BJ (cell line): ENCODE measurements at regions of chr15 and their contacts with region 1.

Region 1: DNA sequence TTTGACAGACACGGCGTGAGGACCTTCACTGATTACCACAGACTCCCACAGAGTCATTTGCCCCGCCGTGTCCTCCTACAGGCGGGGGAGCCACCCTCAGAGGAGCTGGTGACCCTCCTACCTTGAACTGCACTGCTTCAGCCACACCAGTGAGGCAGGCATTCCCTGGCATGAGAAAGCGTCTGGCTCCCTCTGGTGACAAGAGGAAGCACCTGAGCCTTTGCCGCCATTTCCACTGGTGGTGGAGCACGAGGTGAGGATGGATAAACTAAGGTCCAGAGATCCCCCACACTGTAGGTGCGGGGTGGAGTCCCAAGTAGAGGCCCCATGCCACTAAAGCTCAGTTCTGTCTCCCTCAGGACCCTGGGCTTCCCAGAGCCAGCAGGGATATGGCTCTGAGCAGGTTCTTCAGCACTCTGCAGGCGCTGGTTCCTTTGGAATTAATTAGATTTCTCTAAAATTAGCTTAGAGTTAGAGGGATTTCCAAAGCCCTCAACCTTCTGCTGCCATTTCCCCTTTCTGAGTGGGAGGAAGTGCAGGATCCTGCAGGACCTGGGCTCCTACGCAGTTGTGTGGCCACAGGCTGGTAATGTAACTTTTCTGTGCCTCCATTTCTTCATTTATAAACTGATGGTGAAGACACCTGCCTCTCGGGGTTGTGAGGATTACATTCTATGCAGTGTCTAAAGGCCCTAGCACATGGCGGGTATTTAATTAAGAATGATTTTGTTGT is 224.0 kb downstream of the SLCO3A1 start:
- DNase-seq: no peak
- H3K4me3 ChIP-seq: no peak overlapping the region
- H3K27me3 ChIP-seq: no peaks in the 10 kb centered on the region
- CTCF ChIP-seq: peak; percentile 82

Region 2: GRCh38 chr15:91302588-91303439 is 774.7 kb before region 1 on chr15:
- CTCF ChIA-PET with region 1: interaction called, 59 read pairs
- POLR2A ChIA-PET with region 1: no interaction called
- DNase-seq: no peak
- H3K4me3 ChIP-seq: no peak overlapping the region
- H3K27me3 ChIP-seq: peaks cover 2% of the 10 kb centered on the region; the same call in 1 of the 2 replicates
- CTCF ChIP-seq: peak; percentile 74

Region 3: DNA sequence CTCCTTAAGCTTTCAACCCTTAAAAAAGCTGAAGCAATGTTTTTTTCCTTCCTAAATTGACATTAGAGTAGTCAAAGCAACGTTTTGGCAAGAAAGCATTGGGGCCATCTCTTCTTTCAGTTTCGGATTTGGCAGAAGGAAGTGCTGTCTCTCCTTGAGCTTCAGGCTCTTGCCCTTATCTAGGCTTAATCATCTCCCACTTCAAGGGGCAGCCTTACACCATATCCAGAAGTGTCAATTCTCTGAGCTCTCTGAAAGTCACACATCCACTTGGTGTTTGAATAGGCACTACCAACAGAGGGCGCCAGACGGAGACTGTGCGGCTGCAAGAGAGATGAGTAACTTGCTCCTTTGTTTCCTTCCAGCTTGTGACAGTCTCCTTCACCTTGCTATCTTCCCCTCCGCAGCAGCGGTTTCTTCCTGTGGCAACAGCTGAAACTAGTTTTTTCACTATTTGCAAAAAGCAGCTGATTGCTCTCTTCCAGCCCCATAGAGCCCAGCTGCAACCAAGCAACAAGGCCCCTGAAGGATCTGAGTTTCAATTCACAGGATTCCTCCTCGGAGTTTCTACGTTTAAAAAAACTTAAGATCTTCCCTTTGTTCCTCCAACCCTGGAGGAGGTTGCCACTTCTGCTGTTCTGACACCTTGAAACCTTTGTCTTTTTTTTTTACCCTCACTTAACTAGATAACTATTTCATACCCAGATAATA is 371.0 kb before region 1 on chr15:
- CTCF ChIA-PET with region 1: interaction called, 23 read pairs
- POLR2A ChIA-PET with region 1: no interaction called
- DNase-seq: no peak
- H3K4me3 ChIP-seq: no peak overlapping the region
- H3K27me3 ChIP-seq: no peaks in the 10 kb centered on the region
- CTCF ChIP-seq: peak; percentile 77

Region 4: GRCh38 chr15:91844928-91845327 is 232.6 kb before region 1 on chr15:
- CTCF ChIA-PET with region 1: interaction called, 27 read pairs
- POLR2A ChIA-PET with region 1: no interaction called
- DNase-seq: no peak
- H3K4me3 ChIP-seq: no peak overlapping the region
- H3K27me3 ChIP-seq: no peaks in the 10 kb centered on the region
- CTCF ChIP-seq: no peak

Region 5: DNA sequence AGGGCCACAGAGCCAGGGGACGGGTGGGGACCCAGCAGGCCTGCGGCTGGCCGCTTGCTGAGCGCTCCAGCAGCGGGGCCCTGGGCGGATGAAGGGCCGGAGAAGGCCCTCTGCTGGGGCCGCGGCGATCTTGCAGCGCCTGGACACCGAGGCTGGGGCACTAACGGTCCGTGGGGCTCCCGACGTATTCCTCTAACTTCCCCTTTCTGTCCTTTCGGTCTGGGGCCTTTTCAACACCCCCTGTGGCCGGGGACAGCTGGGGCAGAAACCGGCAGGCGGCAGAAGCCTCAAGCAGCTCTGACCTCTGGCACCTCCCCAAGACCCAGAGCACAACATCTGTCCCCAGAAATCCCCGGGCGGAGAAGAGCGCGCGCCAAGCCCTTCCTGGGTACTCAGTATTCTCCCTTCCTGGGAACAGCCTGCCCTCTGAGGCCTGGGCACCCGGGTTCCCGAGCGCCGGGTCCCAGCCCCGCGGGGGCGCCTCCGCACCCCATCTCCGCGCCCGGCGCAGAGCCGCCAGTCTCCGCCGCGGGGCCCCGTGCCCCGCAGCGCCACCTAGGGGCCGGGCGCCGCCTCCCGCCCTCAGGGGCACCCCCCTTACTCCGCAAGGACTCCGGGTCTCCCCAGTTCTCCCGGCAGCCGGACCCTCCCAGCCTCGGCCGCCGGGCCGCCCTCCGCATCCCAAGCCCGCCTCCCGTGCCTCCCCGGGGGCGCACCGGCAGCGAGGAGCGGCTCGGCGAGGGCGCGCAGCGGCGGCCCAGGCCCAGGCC is 224.6 kb before region 1 on chr15:
- CTCF ChIA-PET with region 1: interaction called, 27 read pairs
- POLR2A ChIA-PET with region 1: no interaction called
- DNase-seq: no peak
- H3K4me3 ChIP-seq: peak overlapping the region; percentile 58
- H3K27me3 ChIP-seq: no peaks in the 10 kb centered on the region
- CTCF ChIP-seq: peak; percentile 78

Region 6: GRCh38 chr15:92035961-92036360 is 41.6 kb before region 1 on chr15:
- CTCF ChIA-PET with region 1: no interaction called
- POLR2A ChIA-PET with region 1: no interaction called
- DNase-seq: no peak
- H3K4me3 ChIP-seq: no peak overlapping the region
- H3K27me3 ChIP-seq: no peaks in the 10 kb centered on the region
- CTCF ChIP-seq: no peak

Region 7: DNA sequence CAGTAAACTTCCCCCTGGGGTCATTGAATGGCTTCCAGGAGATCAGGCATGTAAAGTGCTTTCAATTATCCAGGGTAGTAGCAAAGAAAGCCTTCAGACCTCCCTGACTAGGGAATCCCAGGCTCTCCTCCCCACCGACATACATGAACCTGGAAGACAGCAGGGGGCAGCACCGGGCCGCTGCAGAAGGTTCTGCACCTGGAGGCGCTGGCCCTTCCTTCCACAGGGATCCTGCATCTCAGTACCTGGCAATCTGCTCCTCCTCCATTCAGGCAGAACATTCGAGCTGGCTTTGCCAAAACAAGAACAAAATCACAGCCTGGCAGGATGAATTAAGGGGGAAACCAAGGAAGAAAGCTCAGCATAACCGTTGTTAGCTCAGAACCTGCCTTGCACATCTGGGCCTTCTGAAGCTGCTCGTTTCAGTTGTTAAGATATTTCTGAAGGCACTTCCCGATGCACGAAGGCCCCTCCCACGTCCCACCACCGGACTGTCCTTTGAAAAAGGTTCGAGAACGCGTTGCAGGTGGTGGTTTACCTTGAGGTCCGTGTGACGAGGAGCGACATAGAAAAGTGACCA is 13.7 kb after region 1 on chr15:
- CTCF ChIA-PET with region 1: interaction called, 21 read pairs
- POLR2A ChIA-PET with region 1: no interaction called
- DNase-seq: no peak
- H3K4me3 ChIP-seq: no peak overlapping the region
- H3K27me3 ChIP-seq: no peaks in the 10 kb centered on the region
- CTCF ChIP-seq: peak; percentile 74